ENCODE measurements at regions of chr12 and their contacts with region 1.

Region 1: GRCh38 chr12:41254004-41254914 is 66.1 kb downstream of the PDZRN4 start:
- DNase-seq: no peak
- H3K4me3 ChIP-seq: no peak overlapping the region
- H3K27ac ChIP-seq: no peak overlapping the region
- H3K4me1 ChIP-seq: no peaks in the 10 kb centered on the region
- H3K27me3 ChIP-seq: no peaks in the 10 kb centered on the region
- CTCF ChIP-seq: no peak
- EP300 ChIP-seq: no peak
- POLR2A ChIP-seq: no peak

Region 2: GRCh38 chr12:41228066-41228820 is 26.0 kb before region 1 on chr12:
- in situ Hi-C with region 1: no loop called
- intact Hi-C with region 1: loop called (anchors 1 kb)
- DNase-seq: no peak
- H3K4me3 ChIP-seq: no peak overlapping the region
- H3K27ac ChIP-seq: no peak overlapping the region
- H3K4me1 ChIP-seq: no peaks in the 10 kb centered on the region
- H3K27me3 ChIP-seq: no peaks in the 10 kb centered on the region
- CTCF ChIP-seq: no peak
- EP300 ChIP-seq: no peak
- POLR2A ChIP-seq: no peak

Measured in transverse colon (tissue), 4 donors.